Naive thymus-derived CD4-positive, alpha-beta T cell (primary cell): ENCODE measurements at regions of chr6 and their contacts with region 1.

Region 1: DNA sequence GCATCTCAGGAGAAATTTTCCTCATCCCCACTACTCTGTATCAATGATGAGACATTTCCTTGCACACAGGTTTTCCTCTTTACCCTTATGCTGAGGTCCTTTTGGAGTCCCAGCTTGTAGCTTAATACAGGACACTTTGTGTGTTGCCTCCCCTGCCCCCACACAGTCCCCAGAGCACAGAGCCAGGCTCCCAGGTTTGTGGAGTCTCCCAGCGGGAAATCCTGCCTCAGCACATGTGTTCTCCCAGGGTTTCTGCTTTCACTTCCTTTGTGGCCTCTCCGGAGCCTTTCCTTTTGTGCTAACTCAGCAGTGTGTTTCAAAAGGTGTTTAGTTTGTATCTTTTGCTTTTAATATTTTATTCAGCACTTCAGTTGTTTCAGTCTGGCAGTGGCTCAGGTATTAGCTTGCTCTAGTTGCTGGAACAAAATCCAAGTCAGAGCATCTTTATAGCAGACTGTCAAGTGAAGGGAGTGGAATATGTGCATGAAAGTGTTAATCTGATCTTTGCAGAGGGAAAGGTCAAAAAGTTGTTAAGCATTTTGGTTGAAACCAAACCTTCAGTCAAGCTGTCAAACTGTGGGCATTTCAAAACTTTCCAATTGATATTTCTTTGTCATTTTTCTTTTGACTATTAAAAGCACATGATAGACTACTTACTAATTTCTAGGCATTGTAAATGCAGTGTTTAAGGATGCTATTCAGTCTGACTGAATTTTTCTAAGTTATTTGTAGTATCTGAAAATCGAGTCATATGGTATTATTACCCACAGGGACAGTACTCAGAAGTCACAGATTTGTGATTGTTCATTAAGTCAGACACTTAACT is 8.6 kb downstream of the SNX9 start:
- DNase-seq: no peak
- ATAC-seq: no peak
- H3K4me3 ChIP-seq: no peak overlapping the region
- H3K4me3 Mint-ChIP-seq: peak overlapping the region in 9 of 10 donors; percentile 9 to 80 (median 53)
- H3K27ac ChIP-seq: no peak overlapping the region
- H3K27ac Mint-ChIP-seq: peak overlapping the region in 6 of 9 donors; percentile 0 to 65 (median 42)
- H3K4me1 ChIP-seq: peaks cover 0 to 44% of the 10 kb centered on the region in 2 donors
- H3K4me1 Mint-ChIP-seq: peaks cover 27 to 88% (median 79%) of the 10 kb centered on the region in 7 donors
- H3K27me3 ChIP-seq: no peaks in the 10 kb centered on the region
- H3K27me3 Mint-ChIP-seq: no peaks in the 10 kb centered on the region

Region 2: DNA sequence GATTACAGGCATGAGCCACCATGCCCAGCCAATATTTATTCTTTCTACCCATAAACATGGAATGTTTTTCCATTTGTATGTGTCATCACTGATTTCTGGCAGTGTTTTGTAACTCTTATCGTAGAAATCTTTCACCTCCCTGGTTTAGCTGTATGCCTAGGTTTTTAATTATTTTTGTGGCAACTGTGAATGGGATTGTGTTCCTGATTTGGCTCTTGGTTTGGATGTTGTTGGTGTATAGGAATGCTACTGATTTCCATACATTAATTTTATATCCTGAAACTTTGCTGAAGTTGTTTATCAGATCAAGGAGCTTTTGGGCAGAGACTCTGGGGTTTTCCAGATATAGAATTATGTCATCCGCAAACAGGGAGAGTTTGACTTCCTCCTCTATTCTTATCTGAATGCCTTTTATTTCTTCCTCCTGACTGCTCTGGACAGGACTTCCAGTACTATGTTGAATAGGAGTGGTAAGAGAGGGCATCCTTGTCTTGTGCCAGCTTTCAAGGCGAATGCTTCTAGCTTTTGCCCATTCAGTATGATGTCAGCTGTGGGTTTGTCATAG is 252.1 kb before region 1 on chr6:
- CTCF ChIA-PET with region 1: no interaction called
- POLR2A ChIA-PET with region 1: no interaction called
- intact Hi-C with region 1: no loop called
- DNase-seq: no peak
- ATAC-seq: no peak
- H3K4me3 ChIP-seq: no peak overlapping the region
- H3K4me3 Mint-ChIP-seq: no peak overlapping the region
- H3K27ac ChIP-seq: no peak overlapping the region
- H3K27ac Mint-ChIP-seq: no peak overlapping the region
- H3K4me1 ChIP-seq: no peaks in the 10 kb centered on the region
- H3K4me1 Mint-ChIP-seq: peaks cover 0 to 7% (median 2%) of the 10 kb centered on the region in 7 donors
- H3K27me3 ChIP-seq: no peaks in the 10 kb centered on the region
- H3K27me3 Mint-ChIP-seq: peaks cover 0 to 29% (median 0%) of the 10 kb centered on the region in 5 donors

Region 3: DNA sequence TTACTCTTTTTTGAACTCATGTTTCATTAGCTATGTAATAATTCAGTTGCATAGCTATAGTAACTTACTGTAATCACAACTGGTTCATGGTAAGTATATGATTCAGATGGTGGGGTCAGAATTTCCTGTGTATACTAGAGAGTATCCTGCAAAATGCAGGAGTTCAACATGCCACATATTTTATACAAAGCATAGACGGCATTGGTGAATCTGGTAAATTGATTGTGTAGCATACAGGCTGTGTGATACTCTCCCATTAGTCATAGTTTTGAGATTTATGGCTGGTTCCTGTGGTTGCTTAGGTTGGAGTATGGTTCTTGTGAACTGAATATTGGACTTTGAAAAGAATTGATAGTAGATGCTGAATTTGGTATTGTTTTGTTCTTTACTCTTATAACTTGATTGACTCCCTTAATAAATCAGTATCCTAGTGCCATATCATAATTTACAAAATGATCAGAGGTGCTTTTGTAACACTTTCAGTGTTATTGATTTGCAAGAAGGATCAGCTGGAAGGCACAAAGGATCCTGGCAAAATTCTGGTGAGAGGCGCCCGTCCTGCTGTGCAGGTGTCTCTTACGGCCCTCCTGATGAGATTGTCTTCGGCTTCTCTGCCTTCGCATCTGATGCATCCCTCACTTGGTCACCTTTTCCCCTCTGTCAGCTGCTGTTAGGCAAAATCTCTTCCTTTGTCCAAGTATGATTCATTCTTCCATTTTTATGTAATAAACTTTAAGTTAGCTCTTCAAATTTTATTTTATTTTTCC is 14.0 kb after region 1 on chr6:
- CTCF ChIA-PET with region 1: no interaction called
- POLR2A ChIA-PET with region 1: interaction called, 5 read pairs
- intact Hi-C with region 1: loop called in 1 of 2 experiments (anchors 2 kb)
- DNase-seq: no peak
- ATAC-seq: no peak
- H3K4me3 ChIP-seq: no peak overlapping the region
- H3K4me3 Mint-ChIP-seq: peak overlapping the region in 6 of 10 donors; percentile 1 to 50 (median 22)
- H3K27ac ChIP-seq: no peak overlapping the region
- H3K27ac Mint-ChIP-seq: peak overlapping the region in 4 of 9 donors; percentile 5 to 52 (median 36)
- H3K4me1 ChIP-seq: peaks cover 0 to 28% of the 10 kb centered on the region in 2 donors
- H3K4me1 Mint-ChIP-seq: peaks cover 41 to 91% (median 84%) of the 10 kb centered on the region in 7 donors
- H3K27me3 ChIP-seq: peaks cover 0 to 3% of the 10 kb centered on the region in 2 donors
- H3K27me3 Mint-ChIP-seq: no peaks in the 10 kb centered on the region

Region 4: GRCh38 chr6:157867155-157867559 is 35.5 kb after region 1 on chr6:
- CTCF ChIA-PET with region 1: no interaction called
- POLR2A ChIA-PET with region 1: interaction called, 4 read pairs
- intact Hi-C with region 1: loop called in 1 of 2 experiments (anchors 2 kb)
- DNase-seq: peak in 3 of 9 donors; percentile 25 to 40 (median 35)
- ATAC-seq: peak; percentile 58
- H3K4me3 ChIP-seq: no peak overlapping the region
- H3K4me3 Mint-ChIP-seq: peak overlapping the region in 8 of 10 donors; percentile 10 to 58 (median 36)
- H3K27ac ChIP-seq: peak overlapping the region; percentile 44
- H3K27ac Mint-ChIP-seq: peak overlapping the region in 3 of 9 donors; percentile 84 to 89 (median 87)
- H3K4me1 ChIP-seq: peaks cover 2 to 20% of the 10 kb centered on the region in 2 donors
- H3K4me1 Mint-ChIP-seq: peaks cover 13 to 55% (median 34%) of the 10 kb centered on the region in 7 donors
- H3K27me3 ChIP-seq: no peaks in the 10 kb centered on the region
- H3K27me3 Mint-ChIP-seq: peaks cover 0 to 12% (median 0%) of the 10 kb centered on the region in 5 donors